Activated B cell treated with CpG ODN at 0.5 μM for 24 hours (primary cell): ENCODE measurements at regions of chr9 and their contacts with region 1.

Region 1: GRCh38 chr9:76576344-76576743 is 117.4 kb downstream of the GCNT1 start:
- DNase-seq: peak; percentile 22
- ATAC-seq: peak; percentile 91
- H3K4me3 Mint-ChIP-seq: peak overlapping the region; percentile 9
- H3K27ac Mint-ChIP-seq: peak overlapping the region; percentile 76
- H3K4me1 Mint-ChIP-seq: peaks cover 46% of the 10 kb centered on the region
- H3K27me3 Mint-ChIP-seq: peaks cover 2% of the 10 kb centered on the region
- CTCF ChIP-seq: no peak

Region 2: GRCh38 chr9:76475686-76476085 is 100.7 kb before region 1 on chr9:
- CTCF ChIA-PET with region 1: no interaction called
- POLR2A ChIA-PET with region 1: interaction called, 16 read pairs
- intact Hi-C with region 1: loop called (anchors 1 kb)
- DNase-seq: no peak
- ATAC-seq: no peak
- H3K4me3 Mint-ChIP-seq: no peak overlapping the region
- H3K27ac Mint-ChIP-seq: no peak overlapping the region
- H3K4me1 Mint-ChIP-seq: peaks cover 67% of the 10 kb centered on the region
- H3K27me3 Mint-ChIP-seq: peaks cover 5% of the 10 kb centered on the region
- CTCF ChIP-seq: no peak

Region 3: GRCh38 chr9:76530458-76531110 is 45.8 kb before region 1 on chr9:
- CTCF ChIA-PET with region 1: no interaction called
- POLR2A ChIA-PET with region 1: no interaction called
- intact Hi-C with region 1: loop called (anchors 5 kb)
- DNase-seq: no peak
- ATAC-seq: no peak
- H3K4me3 Mint-ChIP-seq: no peak overlapping the region
- H3K27ac Mint-ChIP-seq: peak overlapping the region; percentile 42
- H3K4me1 Mint-ChIP-seq: peaks cover 9% of the 10 kb centered on the region
- H3K27me3 Mint-ChIP-seq: no peaks in the 10 kb centered on the region
- CTCF ChIP-seq: no peak

Region 4: GRCh38 chr9:76562511-76562911 is 13.8 kb before region 1 on chr9:
- CTCF ChIA-PET with region 1: no interaction called
- POLR2A ChIA-PET with region 1: interaction called, 10 read pairs
- intact Hi-C with region 1: loop called (anchors 1 kb)
- DNase-seq: no peak
- ATAC-seq: peak; percentile 57
- H3K4me3 Mint-ChIP-seq: peak overlapping the region; percentile 55
- H3K27ac Mint-ChIP-seq: peak overlapping the region; percentile 65
- H3K4me1 Mint-ChIP-seq: peaks cover 63% of the 10 kb centered on the region
- H3K27me3 Mint-ChIP-seq: no peaks in the 10 kb centered on the region
- CTCF ChIP-seq: no peak

Region 5: GRCh38 chr9:76605321-76605900 is 29.1 kb after region 1 on chr9:
- CTCF ChIA-PET with region 1: no interaction called
- POLR2A ChIA-PET with region 1: interaction called, 3 read pairs
- intact Hi-C with region 1: loop called (anchors 1 kb)
- DNase-seq: no peak
- ATAC-seq: peak; percentile 83
- H3K4me3 Mint-ChIP-seq: no peak overlapping the region
- H3K27ac Mint-ChIP-seq: no peak overlapping the region
- H3K4me1 Mint-ChIP-seq: peaks cover 30% of the 10 kb centered on the region
- H3K27me3 Mint-ChIP-seq: no peaks in the 10 kb centered on the region
- CTCF ChIP-seq: no peak

Region 6: GRCh38 chr9:76624391-76625048 is 48.2 kb after region 1 on chr9:
- CTCF ChIA-PET with region 1: no interaction called
- POLR2A ChIA-PET with region 1: no interaction called
- intact Hi-C with region 1: no loop called
- DNase-seq: no peak
- ATAC-seq: no peak
- H3K4me3 Mint-ChIP-seq: no peak overlapping the region
- H3K27ac Mint-ChIP-seq: no peak overlapping the region
- H3K4me1 Mint-ChIP-seq: peaks cover 41% of the 10 kb centered on the region
- H3K27me3 Mint-ChIP-seq: no peaks in the 10 kb centered on the region
- CTCF ChIP-seq: no peak

Region 7: DNA sequence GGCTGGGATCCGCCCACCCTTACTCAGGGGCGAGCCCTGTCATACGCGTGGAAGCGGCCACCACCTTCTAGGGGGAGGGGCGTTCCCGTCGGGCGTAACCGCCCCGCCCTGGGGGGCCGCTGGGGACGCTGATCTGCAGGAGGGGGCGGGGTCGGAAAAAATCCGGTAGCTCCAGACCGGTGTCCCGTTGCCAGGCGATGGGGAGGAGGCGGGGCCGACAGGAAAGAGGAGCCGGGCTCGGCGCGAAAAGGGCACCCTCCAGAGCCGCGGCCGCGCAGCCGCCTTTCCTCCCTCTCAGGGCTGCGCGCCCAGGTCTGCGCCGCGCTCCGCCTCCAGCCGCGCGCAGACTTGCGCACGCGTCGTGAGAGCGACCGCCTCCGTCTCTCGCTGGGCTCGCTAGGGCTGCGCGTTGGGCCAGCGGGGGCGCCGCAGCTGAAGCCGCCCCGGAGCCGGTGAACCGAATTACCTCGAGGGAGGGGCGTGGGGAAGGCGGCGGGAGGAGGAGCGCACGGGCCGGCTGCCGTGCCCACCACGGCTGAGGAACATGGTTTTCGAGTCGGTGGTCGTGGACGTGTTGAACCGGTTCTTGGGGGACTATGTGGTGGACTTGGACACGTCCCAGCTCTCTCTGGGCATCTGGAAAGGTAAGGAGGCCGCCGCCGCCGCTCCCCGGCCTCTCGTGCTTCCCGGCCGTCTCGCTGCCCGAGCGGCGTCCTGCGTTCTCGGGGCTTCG is 601.0 kb after region 1 on chr9 and contains the start of gene VPS13A:
- CTCF ChIA-PET with region 1: no interaction called
- POLR2A ChIA-PET with region 1: no interaction called
- intact Hi-C with region 1: loop called (anchors 5 kb)
- DNase-seq: peak; percentile 92
- ATAC-seq: peak; percentile 82
- H3K4me3 Mint-ChIP-seq: peak within 1 kb of the TSS; percentile 92
- H3K27ac Mint-ChIP-seq: peak within 1 kb of the TSS; percentile 83
- H3K4me1 Mint-ChIP-seq: peaks cover 29% of the 10 kb centered on the region
- H3K27me3 Mint-ChIP-seq: no peaks in the 10 kb centered on the region
- CTCF ChIP-seq: no peak
- total RNA-seq, gene VPS13A: 58.0 and 69.8 TPM in 2 replicates

Region 8: GRCh38 chr9:78370991-78371390 is 1794.6 kb after region 1 on chr9:
- CTCF ChIA-PET with region 1: no interaction called
- POLR2A ChIA-PET with region 1: no interaction called
- intact Hi-C with region 1: no loop called
- DNase-seq: no peak
- ATAC-seq: no peak
- H3K4me3 Mint-ChIP-seq: no peak overlapping the region
- H3K27ac Mint-ChIP-seq: no peak overlapping the region
- H3K4me1 Mint-ChIP-seq: no peaks in the 10 kb centered on the region
- H3K27me3 Mint-ChIP-seq: peaks cover 23% of the 10 kb centered on the region
- CTCF ChIP-seq: no peak